ENCODE measurements at regions of chr3 and their contacts with region 1.

Region 1: GRCh38 chr3:149120051-149120972 is 9.1 kb upstream of the HPS3 start:
- DNase-seq: no peak
- ATAC-seq: peak; percentile 70
- H3K4me3 Mint-ChIP-seq: no peak overlapping the region
- H3K27ac Mint-ChIP-seq: no peak overlapping the region
- H3K4me1 Mint-ChIP-seq: no peaks in the 10 kb centered on the region
- H3K27me3 Mint-ChIP-seq: peaks cover 4% of the 10 kb centered on the region

Region 2: GRCh38 chr3:148955544-148956346 is 164.6 kb before region 1 on chr3:
- CTCF ChIA-PET with region 1: interaction called, 9 read pairs
- POLR2A ChIA-PET with region 1: no interaction called
- intact Hi-C with region 1: loop called (anchors 1 to 2 kb)
- DNase-seq: peak; percentile 42
- ATAC-seq: peak; percentile 23
- H3K4me3 Mint-ChIP-seq: no peak overlapping the region
- H3K27ac Mint-ChIP-seq: no peak overlapping the region
- H3K4me1 Mint-ChIP-seq: peaks cover 2% of the 10 kb centered on the region
- H3K27me3 Mint-ChIP-seq: no peaks in the 10 kb centered on the region

Region 3: DNA sequence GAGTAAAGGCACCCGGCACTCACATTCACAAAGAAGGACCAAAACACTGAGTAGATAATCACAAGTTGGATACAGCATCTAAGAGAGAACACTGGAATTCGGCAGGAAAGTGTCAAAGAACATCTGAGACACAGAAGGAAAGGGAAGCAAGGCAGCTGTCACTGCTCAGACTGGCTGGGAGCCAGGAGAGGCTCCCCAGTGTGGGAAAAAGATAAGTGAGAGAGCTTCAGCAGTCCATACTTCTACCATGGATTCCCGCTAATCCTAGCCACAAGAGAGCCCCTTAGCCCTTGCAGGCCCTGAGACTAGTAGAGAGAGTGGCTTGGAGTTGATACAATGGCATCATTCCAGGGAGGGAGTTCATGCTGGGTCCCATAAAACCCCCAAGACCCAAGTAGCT is 138.0 kb after region 1 on chr3:
- CTCF ChIA-PET with region 1: interaction called, 14 read pairs
- POLR2A ChIA-PET with region 1: no interaction called
- intact Hi-C with region 1: no loop called
- DNase-seq: no peak
- ATAC-seq: no peak
- H3K4me3 Mint-ChIP-seq: no peak overlapping the region
- H3K27ac Mint-ChIP-seq: no peak overlapping the region
- H3K4me1 Mint-ChIP-seq: no peaks in the 10 kb centered on the region
- H3K27me3 Mint-ChIP-seq: no peaks in the 10 kb centered on the region

Region 4: GRCh38 chr3:149273096-149273751 is 152.9 kb after region 1 on chr3:
- CTCF ChIA-PET with region 1: interaction called, 104 read pairs
- POLR2A ChIA-PET with region 1: interaction called, 3 read pairs
- intact Hi-C with region 1: loop called (anchors 1 kb)
- DNase-seq: peak; percentile 28
- ATAC-seq: peak; percentile 79
- H3K4me3 Mint-ChIP-seq: no peak overlapping the region
- H3K27ac Mint-ChIP-seq: no peak overlapping the region
- H3K4me1 Mint-ChIP-seq: peaks cover 7% of the 10 kb centered on the region
- H3K27me3 Mint-ChIP-seq: no peaks in the 10 kb centered on the region

Region 5: GRCh38 chr3:149280671-149281349 is 160.5 kb after region 1 on chr3:
- CTCF ChIA-PET with region 1: interaction called, 104 read pairs
- POLR2A ChIA-PET with region 1: no interaction called
- intact Hi-C with region 1: no loop called
- DNase-seq: no peak
- ATAC-seq: no peak
- H3K4me3 Mint-ChIP-seq: no peak overlapping the region
- H3K27ac Mint-ChIP-seq: no peak overlapping the region
- H3K4me1 Mint-ChIP-seq: peaks cover 7% of the 10 kb centered on the region
- H3K27me3 Mint-ChIP-seq: no peaks in the 10 kb centered on the region

Region 6: DNA sequence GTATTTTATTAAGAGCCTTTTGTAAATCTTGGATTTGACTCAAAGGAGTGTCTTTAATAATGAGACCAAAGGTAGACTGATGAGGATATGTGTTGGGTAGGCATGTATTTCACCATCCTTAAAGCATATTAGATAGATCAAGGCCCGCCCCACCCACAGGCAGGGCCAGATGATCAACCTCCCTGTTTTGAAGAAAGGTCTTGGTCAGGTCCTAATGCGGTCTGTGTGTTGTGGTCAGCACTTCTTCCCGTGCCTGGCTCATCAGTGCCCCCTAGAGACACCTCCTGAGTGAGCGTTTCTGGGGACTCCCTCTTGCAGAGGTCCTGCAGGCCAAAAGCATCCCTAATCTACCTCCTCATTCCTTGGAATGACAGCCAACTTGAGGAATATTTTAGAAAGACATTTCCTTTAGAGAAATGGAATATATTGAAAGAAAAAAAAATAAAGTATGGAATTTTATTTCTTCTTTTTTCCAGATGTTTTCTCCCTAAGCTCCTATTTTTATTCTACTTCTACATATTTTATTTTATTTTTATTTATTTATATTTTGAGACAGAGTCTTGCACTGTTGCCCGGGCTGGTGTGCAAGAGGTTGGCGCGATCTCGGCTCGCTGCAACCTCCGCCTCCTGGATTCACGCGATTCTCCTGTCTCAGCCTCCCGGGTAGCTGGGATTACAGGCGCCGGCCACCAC is 360.2 kb after region 1 on chr3:
- CTCF ChIA-PET with region 1: no interaction called
- POLR2A ChIA-PET with region 1: no interaction called
- intact Hi-C with region 1: loop called in 1 of 2 experiments (anchors 1 kb)
- DNase-seq: peak; percentile 70
- ATAC-seq: peak; percentile 51
- H3K4me3 Mint-ChIP-seq: no peak overlapping the region
- H3K27ac Mint-ChIP-seq: no peak overlapping the region
- H3K4me1 Mint-ChIP-seq: no peaks in the 10 kb centered on the region
- H3K27me3 Mint-ChIP-seq: peaks cover 2% of the 10 kb centered on the region

Measured in activated CD4-positive, alpha-beta T cell treated with anti-CD3 and anti-CD28 coated beads for 36 hours (primary cell).